SK-N-SH (cell line): ENCODE measurements at regions of chr15 and their contacts with region 1.

Region 1: GRCh38 chr15:35595656-35596055 is 49.7 kb upstream of the DPH6 start:
- DNase-seq: no peak
- H3K4me3 ChIP-seq: no peak overlapping the region
- H3K27ac ChIP-seq: no peak overlapping the region
- H3K4me1 ChIP-seq: no peaks in the 10 kb centered on the region; a peak in 1 of 4 replicates
- H3K27me3 ChIP-seq: no peaks in the 10 kb centered on the region
- CTCF ChIP-seq: no peak
- EP300 ChIP-seq: no peak
- RAD21 ChIP-seq: no peak

Region 2: GRCh38 chr15:35583863-35584528 is 11.7 kb before region 1 on chr15:
- CTCF ChIA-PET with region 1: interaction called, 10 read pairs
- POLR2A ChIA-PET with region 1: no interaction called
- DNase-seq: no peak
- H3K4me3 ChIP-seq: no peak overlapping the region
- H3K27ac ChIP-seq: no peak overlapping the region
- H3K4me1 ChIP-seq: no peaks in the 10 kb centered on the region
- H3K27me3 ChIP-seq: no peaks in the 10 kb centered on the region
- CTCF ChIP-seq: no peak
- EP300 ChIP-seq: no peak
- RAD21 ChIP-seq: no peak

Region 3: DNA sequence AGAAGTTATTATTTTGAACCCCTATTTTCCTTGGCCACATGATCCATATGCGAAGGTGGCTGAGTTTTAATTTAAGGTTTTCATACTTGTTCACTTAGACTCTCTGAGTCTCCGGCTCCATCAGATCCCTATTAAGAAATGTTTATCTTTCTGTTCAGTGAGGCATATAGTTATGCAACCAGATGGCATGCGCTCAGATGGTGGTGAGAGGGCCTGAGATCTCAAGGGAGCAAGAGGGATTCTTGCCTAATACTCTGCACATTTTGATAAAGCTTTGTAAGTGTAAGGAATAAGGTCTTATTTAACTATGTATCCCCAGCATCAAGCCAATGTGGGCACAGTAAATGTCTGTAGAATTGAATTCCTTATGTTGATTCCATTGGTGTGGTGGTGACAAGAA is 29.2 kb after region 1 on chr15:
- CTCF ChIA-PET with region 1: no interaction called
- POLR2A ChIA-PET with region 1: no interaction called
- DNase-seq: no peak
- H3K4me3 ChIP-seq: no peak overlapping the region
- H3K27ac ChIP-seq: no peak overlapping the region
- H3K4me1 ChIP-seq: peaks cover 0 to 11% of the 10 kb centered on the region in 2 experiments; a peak in 3 of 4 replicates
- H3K27me3 ChIP-seq: no peaks in the 10 kb centered on the region
- CTCF ChIP-seq: no peak
- EP300 ChIP-seq: no peak
- RAD21 ChIP-seq: no peak

Region 4: DNA sequence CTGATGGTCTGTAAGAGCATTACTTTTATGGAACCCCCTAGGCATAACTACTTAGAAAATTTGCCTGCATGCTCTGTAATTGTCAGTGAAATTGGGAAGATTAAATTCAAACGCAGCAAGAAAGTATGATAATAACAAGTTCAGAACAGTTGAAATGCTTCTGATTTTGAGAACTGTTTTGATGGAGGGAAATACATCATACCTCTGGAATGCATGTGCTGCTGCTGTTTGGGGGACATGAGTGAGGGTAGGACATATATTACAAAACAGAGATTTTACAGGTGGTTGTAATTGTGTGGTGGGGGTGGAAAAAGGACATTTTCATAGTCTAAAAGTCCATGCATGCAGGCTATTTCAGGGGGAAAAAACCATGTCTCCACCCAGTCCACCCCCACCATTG is 85.3 kb after region 1 on chr15:
- CTCF ChIA-PET with region 1: no interaction called
- POLR2A ChIA-PET with region 1: no interaction called
- DNase-seq: no peak
- H3K4me3 ChIP-seq: no peak overlapping the region
- H3K27ac ChIP-seq: peak overlapping the region in 1 of 2 experiments; percentile 22; a peak in 1 of 4 replicates
- H3K4me1 ChIP-seq: peaks cover 0 to 5% of the 10 kb centered on the region in 2 experiments; a peak in 2 of 4 replicates
- H3K27me3 ChIP-seq: no peaks in the 10 kb centered on the region
- CTCF ChIP-seq: no peak
- EP300 ChIP-seq: no peak
- RAD21 ChIP-seq: no peak